GM10248 (cell line): ENCODE measurements at regions of chr11 and their contacts with region 1.

Region 1: GRCh38 chr11:124673333-124674167 is at the starts of genes SIAE and SPA17:
- DNase-seq: peak; percentile 96
- CTCF ChIP-seq: no peak

Region 2: GRCh38 chr11:124662106-124662505 is 11.4 kb before region 1 on chr11:
- CTCF ChIA-PET with region 1: interaction called, 31 read pairs
- POLR2A ChIA-PET with region 1: no interaction called
- DNase-seq: no peak
- CTCF ChIP-seq: no peak

Region 3: GRCh38 chr11:124758317-124759203 is 85.0 kb after region 1 on chr11:
- CTCF ChIA-PET with region 1: interaction called, 86 read pairs
- POLR2A ChIA-PET with region 1: no interaction called
- DNase-seq: peak; percentile 80
- CTCF ChIP-seq: peak; percentile 90

Region 4: GRCh38 chr11:124793466-124794278 is 120.1 kb after region 1 on chr11:
- CTCF ChIA-PET with region 1: interaction called, 53 read pairs
- POLR2A ChIA-PET with region 1: no interaction called
- DNase-seq: peak; percentile 50
- CTCF ChIP-seq: peak; percentile 77

Region 5: DNA sequence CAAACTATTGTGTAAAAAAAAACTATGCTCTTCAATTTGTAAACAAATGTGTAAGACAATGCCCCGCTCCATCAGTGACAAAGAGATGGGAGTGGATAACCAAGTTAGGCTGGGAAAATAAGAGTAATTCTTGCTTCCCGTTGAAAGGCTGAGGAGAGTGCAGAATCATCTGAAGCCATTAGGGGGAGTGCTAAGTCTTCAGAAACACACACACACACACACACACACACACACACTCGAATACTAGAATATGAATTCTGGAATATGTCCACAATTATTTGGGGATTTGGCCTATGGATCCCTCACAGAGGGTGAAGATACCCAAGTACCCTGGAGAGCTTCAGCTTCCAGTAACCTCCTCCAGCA is 163.9 kb after region 1 on chr11:
- CTCF ChIA-PET with region 1: interaction called, 67 read pairs
- POLR2A ChIA-PET with region 1: no interaction called
- DNase-seq: peak; percentile 44
- CTCF ChIP-seq: peak; percentile 69